K562 (cell line): ENCODE measurements at regions of chr12 and their contacts with region 1.

Region 1: GRCh38 chr12:49110464-49111155 is at the start of gene LMBR1L:
- DNase-seq: peak; percentile 99 to 100 (median 99)
- ATAC-seq: peak; percentile 97
- H3K4me3 ChIP-seq: peak within 1 kb of the TSS; percentile 81
- H3K27ac ChIP-seq: peak within 1 kb of the TSS; percentile 84
- H3K4me1 ChIP-seq: peaks cover 15 to 26% of the 10 kb centered on the region in 2 experiments; a peak in 4 of 5 replicates
- H3K27me3 ChIP-seq: no peaks in the 10 kb centered on the region
- CTCF ChIP-seq: peak; percentile 55 to 60 (median 56); a peak in 5 of 6 replicates
- EP300 ChIP-seq: no peak
- POLR2A ChIP-seq: peak; percentile 79
- RAD21 ChIP-seq: no peak; a peak in 2 of 4 replicates
- polyA plus RNA-seq, gene LMBR1L: 2.5 to 5.3 TPM

Region 2: DNA sequence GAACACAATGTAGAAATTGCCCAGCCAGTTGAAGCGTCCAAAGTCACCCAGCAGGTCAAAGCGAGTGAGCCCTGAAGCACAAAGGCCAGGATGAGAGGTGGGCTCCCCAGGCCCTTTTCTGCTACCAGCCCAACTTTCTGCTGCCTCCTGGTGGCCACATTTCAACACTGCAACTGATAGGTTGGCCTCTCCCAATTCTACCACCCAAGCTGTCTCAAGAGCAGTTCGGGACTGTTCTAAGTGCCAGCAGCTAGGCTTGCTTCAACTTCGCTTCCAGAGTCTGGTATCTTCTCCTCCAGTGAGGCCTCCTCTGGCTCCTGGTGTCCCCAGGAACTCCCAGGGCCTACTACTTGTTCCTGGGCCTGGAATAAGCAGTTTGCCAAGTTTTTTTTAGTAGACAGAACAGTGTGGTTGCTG is 12.6 kb before region 1 on chr12:
- CTCF ChIA-PET with region 1: no interaction called
- POLR2A ChIA-PET with region 1: interaction called, 103 read pairs
- in situ Hi-C with region 1: no loop called
- intact Hi-C with region 1: no loop called
- DNase-seq: peak; percentile 68 to 78 (median 74)
- ATAC-seq: peak; percentile 76
- H3K4me3 ChIP-seq: no peak overlapping the region
- H3K27ac ChIP-seq: no peak overlapping the region; the same call in 2 of the 3 replicates
- H3K4me1 ChIP-seq: peaks cover 27 to 28% of the 10 kb centered on the region in 2 experiments
- H3K27me3 ChIP-seq: no peaks in the 10 kb centered on the region
- CTCF ChIP-seq: peak; percentile 86 to 94 (median 89)
- EP300 ChIP-seq: no peak
- POLR2A ChIP-seq: no peak
- RAD21 ChIP-seq: peak; percentile 64 to 85